AG04450 (cell line): ENCODE measurements at regions of chr7 and their contacts with region 1.

Region 1: GRCh38 chr7:152463709-152464311 is 28.0 kb upstream of the KMT2C start:
- DNase-seq: peak; percentile 97
- H3K4me3 ChIP-seq: peak overlapping the region; percentile 80
- H3K27ac ChIP-seq: peak overlapping the region; percentile 85
- H3K27me3 ChIP-seq: no peaks in the 10 kb centered on the region
- CTCF ChIP-seq: no peak

Region 2: DNA sequence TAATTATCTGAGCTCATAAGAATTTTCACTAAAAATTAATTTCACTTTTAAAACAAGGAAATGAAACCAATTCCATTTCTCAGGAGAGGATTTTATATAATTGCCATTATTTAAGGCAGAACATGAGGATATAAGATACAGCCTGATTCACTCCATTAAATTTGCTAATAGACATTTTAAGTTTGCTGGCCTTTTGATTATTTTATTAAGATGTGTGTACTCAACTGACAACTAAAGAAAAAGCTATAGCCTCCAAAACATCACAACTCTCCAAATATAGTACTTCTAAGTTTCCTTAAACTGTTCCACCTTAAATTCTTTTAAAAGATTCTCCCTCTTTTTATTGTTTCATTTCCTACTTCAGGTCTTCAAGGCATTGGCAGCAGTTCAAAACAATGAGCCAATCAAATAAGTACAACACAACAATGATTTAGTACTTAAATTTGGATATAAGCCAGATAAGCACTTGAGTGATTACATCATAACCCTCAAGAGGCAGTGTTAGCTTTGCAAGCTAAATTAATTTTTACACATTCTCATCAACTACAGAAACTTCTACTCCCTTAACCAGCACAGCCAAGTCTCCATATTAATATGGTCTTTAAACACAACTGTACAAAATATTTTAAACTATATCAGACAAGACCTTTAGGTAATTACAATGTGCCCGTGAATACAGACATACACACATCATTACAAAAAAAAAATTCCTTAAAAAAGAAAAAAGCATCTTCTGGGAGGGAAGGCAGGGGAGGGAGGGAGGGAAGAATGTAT is 149.8 kb before region 1 on chr7:
- CTCF ChIA-PET with region 1: no interaction called
- POLR2A ChIA-PET with region 1: no interaction called
- DNase-seq: peak; percentile 29
- H3K4me3 ChIP-seq: no peak overlapping the region
- H3K27ac ChIP-seq: no peak overlapping the region
- H3K27me3 ChIP-seq: no peaks in the 10 kb centered on the region
- CTCF ChIP-seq: no peak

Region 3: GRCh38 chr7:152436111-152436930 is 27.5 kb before region 1 on chr7:
- CTCF ChIA-PET with region 1: no interaction called
- POLR2A ChIA-PET with region 1: interaction called, 12 read pairs
- DNase-seq: peak; percentile 68
- H3K4me3 ChIP-seq: peak overlapping the region; percentile 68
- H3K27ac ChIP-seq: no peak overlapping the region
- H3K27me3 ChIP-seq: no peaks in the 10 kb centered on the region
- CTCF ChIP-seq: no peak